ENCODE measurements at regions of chr12 and their contacts with region 1.

Region 1: GRCh38 chr12:48924617-48925303 is 532 bp downstream of the FKBP11 start:
- DNase-seq: peak; percentile 11
- H3K4me3 ChIP-seq: peak overlapping the region; percentile 64 to 87 (median 73)
- H3K27ac ChIP-seq: peak overlapping the region; percentile 1
- H3K4me1 ChIP-seq: peaks cover 7% of the 10 kb centered on the region
- H3K27me3 ChIP-seq: no peaks in the 10 kb centered on the region
- CTCF ChIP-seq: peak; percentile 60

Region 2: GRCh38 chr12:48890657-48891418 is 33.9 kb before region 1 on chr12:
- CTCF ChIA-PET with region 1: interaction called, 31 read pairs
- dilution Hi-C with region 1: no loop called
- in situ Hi-C with region 1: no loop called
- intact Hi-C with region 1: no loop called
- DNase-seq: peak; percentile 65
- H3K4me3 ChIP-seq: peak overlapping the region in 1 of 3 experiments; percentile 20
- H3K27ac ChIP-seq: no peak overlapping the region
- H3K4me1 ChIP-seq: peaks cover 4% of the 10 kb centered on the region
- H3K27me3 ChIP-seq: no peaks in the 10 kb centered on the region
- CTCF ChIP-seq: peak; percentile 79 to 95

Measured in mammary epithelial cell (primary cell).